ENCODE measurements at regions of chr7 and their contacts with region 1.

Region 1: GRCh38 chr7:129367700-129368388 is 66.4 kb upstream of the STRIP2 start:
- DNase-seq: peak; percentile 36
- ATAC-seq: peak; percentile 97
- H3K4me3 ChIP-seq: no peak overlapping the region
- H3K27ac ChIP-seq: no peak overlapping the region
- H3K4me1 ChIP-seq: no peaks in the 10 kb centered on the region
- H3K27me3 ChIP-seq: no peaks in the 10 kb centered on the region
- CTCF ChIP-seq: peak; percentile 84
- EP300 ChIP-seq: no peak
- POLR2A ChIP-seq: no peak
- RAD21 ChIP-seq: peak; percentile 47

Region 2: DNA sequence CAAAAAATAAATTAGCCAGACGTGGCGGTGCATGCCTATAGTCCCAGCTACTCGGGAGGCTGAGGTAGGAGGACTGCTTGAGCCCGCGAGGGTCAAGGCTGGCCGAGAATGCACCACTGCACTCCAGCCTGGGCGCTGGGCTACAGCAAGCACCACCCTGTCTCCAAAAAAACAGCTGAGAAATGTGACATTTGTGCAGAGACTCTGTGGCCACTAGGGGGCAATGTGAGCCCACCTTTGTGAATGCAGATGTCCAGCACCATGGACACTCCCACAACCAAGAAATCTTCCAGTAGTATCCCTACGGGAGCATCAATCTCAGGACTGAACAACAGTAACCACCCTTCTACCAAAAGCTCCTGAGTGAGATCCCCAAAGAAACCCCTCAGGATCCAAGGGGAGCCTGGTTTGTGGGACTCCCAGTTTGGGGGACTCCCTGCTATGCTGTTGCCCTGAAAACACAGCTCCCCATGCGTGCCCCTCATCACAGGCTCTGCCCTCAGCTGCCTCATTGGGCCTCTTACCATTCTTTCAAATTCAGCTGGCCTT is 149.3 kb before region 1 on chr7:
- CTCF ChIA-PET with region 1: no interaction called
- POLR2A ChIA-PET with region 1: no interaction called
- in situ Hi-C with region 1: no loop called
- intact Hi-C with region 1: loop called (anchors 1 kb)
- DNase-seq: peak; percentile 81
- ATAC-seq: peak; percentile 82
- H3K4me3 ChIP-seq: peak overlapping the region in 1 of 3 experiments; percentile 35; a peak in 1 of 6 replicates
- H3K27ac ChIP-seq: no peak overlapping the region
- H3K4me1 ChIP-seq: peaks cover 34% of the 10 kb centered on the region
- H3K27me3 ChIP-seq: no peaks in the 10 kb centered on the region
- CTCF ChIP-seq: peak; percentile 96
- EP300 ChIP-seq: no peak
- POLR2A ChIP-seq: no peak
- RAD21 ChIP-seq: peak; percentile 90

Region 3: GRCh38 chr7:129462420-129462819 is 94.6 kb after region 1 on chr7:
- CTCF ChIA-PET with region 1: no interaction called
- POLR2A ChIA-PET with region 1: no interaction called
- in situ Hi-C with region 1: loop called (anchors 5 kb)
- intact Hi-C with region 1: no loop called
- DNase-seq: no peak
- ATAC-seq: no peak
- H3K4me3 ChIP-seq: no peak overlapping the region
- H3K27ac ChIP-seq: no peak overlapping the region
- H3K4me1 ChIP-seq: no peaks in the 10 kb centered on the region
- H3K27me3 ChIP-seq: no peaks in the 10 kb centered on the region
- CTCF ChIP-seq: no peak
- EP300 ChIP-seq: no peak
- POLR2A ChIP-seq: no peak
- RAD21 ChIP-seq: no peak

Region 4: DNA sequence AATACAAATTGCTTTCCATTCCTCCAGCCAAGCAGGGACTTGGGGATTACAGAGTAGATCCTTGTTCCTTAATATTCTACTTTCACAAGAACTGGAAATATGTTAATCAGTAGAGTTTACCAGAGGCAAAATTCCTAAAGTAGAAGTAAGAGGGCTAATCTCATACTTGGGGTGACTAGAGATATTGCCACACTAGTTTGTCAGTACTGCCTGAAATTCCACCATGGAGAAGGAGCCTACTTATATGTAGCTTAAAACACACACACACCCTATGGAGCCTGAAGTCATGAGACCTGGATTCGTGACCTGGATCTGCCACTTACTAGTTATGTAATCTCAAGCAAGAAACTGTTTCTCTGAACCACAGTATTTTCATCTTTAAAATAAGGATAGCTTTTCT is 100.2 kb after region 1 on chr7:
- CTCF ChIA-PET with region 1: interaction called, 21 read pairs
- POLR2A ChIA-PET with region 1: no interaction called
- in situ Hi-C with region 1: loop called (anchors 5 kb)
- intact Hi-C with region 1: loop called (anchors 1 kb)
- DNase-seq: no peak
- ATAC-seq: no peak
- H3K4me3 ChIP-seq: no peak overlapping the region
- H3K27ac ChIP-seq: no peak overlapping the region
- H3K4me1 ChIP-seq: no peaks in the 10 kb centered on the region
- H3K27me3 ChIP-seq: no peaks in the 10 kb centered on the region
- CTCF ChIP-seq: no peak
- EP300 ChIP-seq: no peak
- POLR2A ChIP-seq: no peak
- RAD21 ChIP-seq: no peak

Region 5: DNA sequence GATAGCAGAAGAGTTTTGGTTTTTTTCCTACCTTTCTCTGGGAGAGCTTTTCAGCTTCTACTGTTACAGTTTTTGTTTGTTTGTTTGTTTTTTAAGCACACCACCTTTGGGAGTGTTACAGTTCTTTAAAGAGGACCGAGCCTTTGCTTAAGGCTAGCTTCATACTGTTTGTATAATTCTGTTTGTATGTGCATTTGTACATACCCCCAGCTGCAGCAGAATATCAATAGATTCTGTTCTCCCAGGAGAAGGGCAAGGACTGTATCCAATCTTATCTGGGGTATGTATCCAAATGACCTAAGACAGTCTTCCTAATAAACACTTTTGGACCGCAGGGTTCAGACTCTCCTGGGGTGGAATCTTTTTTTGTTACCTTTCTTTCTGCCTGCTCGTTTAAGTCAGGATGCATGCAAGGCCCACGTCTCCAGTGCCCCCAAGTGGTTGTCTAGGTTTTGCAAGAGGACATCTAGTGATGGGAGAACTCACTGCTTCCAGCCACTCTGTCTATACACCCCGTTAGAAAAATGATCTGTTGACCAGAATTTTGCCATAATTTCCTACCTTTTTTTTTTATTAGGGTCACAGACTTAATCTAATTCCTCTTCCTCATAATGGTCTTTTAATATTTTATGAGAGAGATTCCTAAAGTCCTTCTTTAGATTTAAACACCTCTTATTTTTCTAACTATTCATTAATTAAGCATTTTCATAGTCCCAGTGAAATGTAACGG is 267.6 kb after region 1 on chr7:
- CTCF ChIA-PET with region 1: interaction called, 6 read pairs
- POLR2A ChIA-PET with region 1: no interaction called
- in situ Hi-C with region 1: loop called (anchors 25 kb)
- intact Hi-C with region 1: loop called (anchors 10 kb)
- DNase-seq: peak; percentile 73
- ATAC-seq: peak; percentile 99
- H3K4me3 ChIP-seq: no peak overlapping the region
- H3K27ac ChIP-seq: no peak overlapping the region
- H3K4me1 ChIP-seq: peaks cover 19% of the 10 kb centered on the region
- H3K27me3 ChIP-seq: no peaks in the 10 kb centered on the region
- CTCF ChIP-seq: peak; percentile 84
- EP300 ChIP-seq: no peak
- POLR2A ChIP-seq: no peak
- RAD21 ChIP-seq: peak; percentile 46; the same call in 1 of the 2 replicates

Region 6: GRCh38 chr7:129644634-129645230 is 276.9 kb after region 1 on chr7:
- CTCF ChIA-PET with region 1: interaction called, 14 read pairs
- POLR2A ChIA-PET with region 1: no interaction called
- in situ Hi-C with region 1: loop called (anchors 25 kb)
- intact Hi-C with region 1: loop called (anchors 10 kb)
- DNase-seq: peak; percentile 37
- ATAC-seq: no peak; the same call in 2 of the 3 replicates
- H3K4me3 ChIP-seq: no peak overlapping the region
- H3K27ac ChIP-seq: no peak overlapping the region
- H3K4me1 ChIP-seq: no peaks in the 10 kb centered on the region
- H3K27me3 ChIP-seq: no peaks in the 10 kb centered on the region
- CTCF ChIP-seq: peak; percentile 39
- EP300 ChIP-seq: no peak
- POLR2A ChIP-seq: no peak
- RAD21 ChIP-seq: no peak; the same call in 1 of the 2 replicates